Posterior cingulate gyrus (tissue), 11 donors: ENCODE measurements at regions of chr16 and their contacts with region 1.

Region 1: GRCh38 chr16:56191156-56191815 is at the start of gene GNAO1:
- DNase-seq: peak; percentile 65 to 97 (median 78)

Region 2: DNA sequence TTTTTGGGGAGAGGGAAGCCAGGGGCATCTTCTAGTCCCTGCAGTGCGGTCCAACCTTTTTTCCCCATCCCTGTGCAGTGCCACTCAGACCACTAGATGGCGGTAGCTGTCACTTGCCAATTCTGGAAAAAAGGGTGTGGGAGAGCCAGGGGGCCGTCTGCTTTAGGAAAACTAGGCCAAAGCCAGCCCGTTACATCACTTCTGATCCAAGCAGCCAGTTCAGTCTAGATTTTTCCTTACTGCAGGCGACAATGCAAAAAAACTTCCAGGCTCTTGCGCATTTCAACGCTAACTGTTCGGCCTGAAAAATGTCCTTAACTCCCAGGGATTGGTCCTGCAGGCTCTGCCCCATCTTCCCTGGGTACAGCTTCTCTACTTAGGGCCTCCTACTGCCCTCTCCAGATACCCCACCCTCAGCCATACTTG is 246.9 kb before region 1 on chr16:
- intact Hi-C with region 1: loop called (anchors 2 kb)
- DNase-seq: peak; percentile 65 to 96 (median 82)

Region 3: GRCh38 chr16:56246051-56246817 is 54.9 kb after region 1 on chr16:
- intact Hi-C with region 1: loop called (anchors 1 kb)
- DNase-seq: peak in 9 of 10 donors; percentile 59 to 97 (median 79)

Region 4: GRCh38 chr16:56305956-56306565 is 114.8 kb after region 1 on chr16:
- intact Hi-C with region 1: loop called (anchors 2 kb)
- DNase-seq: peak in 2 of 10 donors; percentile 69 to 79

Region 5: DNA sequence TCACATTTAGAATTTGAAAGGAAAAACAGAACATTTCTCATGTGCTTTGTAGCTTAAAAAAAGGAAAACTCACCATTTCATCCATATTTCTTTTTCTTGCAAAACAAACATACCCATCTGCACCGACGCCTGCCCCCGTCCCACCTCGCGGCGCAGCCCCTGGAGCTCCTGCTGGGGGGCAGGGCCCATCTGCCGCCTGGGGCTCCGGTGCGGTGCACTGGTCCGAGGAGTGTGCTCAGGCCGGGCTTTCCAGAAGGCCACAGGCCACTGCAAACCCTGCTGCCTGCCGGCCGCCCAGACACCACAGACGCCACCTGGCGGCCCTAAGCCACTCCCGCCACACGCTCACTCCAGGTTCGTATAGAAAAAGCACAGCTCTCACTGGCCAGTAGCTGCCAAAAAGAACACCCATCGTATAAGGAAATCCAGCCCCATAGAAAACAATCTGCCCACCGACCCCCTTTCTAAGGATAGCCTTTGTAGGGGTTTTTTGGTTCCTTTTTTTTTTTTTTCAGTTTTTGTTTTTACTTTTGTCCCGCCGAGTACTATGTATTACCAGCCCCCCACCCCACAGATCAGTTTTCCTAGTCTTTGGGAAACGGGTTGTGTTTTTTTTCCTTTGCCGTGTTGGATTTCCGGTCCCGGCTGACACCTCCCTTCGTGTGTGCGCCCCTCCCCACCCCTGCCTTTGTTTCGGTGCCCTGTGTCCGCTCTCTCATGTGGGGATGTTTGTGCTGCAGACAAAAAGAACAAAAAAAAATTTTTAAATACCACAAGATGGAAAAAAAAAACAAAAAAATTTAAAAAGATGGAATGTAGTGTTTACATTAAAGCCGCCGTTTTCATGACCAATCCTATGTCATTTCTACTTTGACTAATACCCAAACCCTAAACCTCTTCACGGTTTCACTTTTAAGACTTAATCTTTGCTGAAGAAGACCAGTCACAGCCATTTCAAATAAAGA is 165.3 kb after region 1 on chr16:
- intact Hi-C with region 1: loop called (anchors 1 kb)
- DNase-seq: peak; percentile 54 to 96 (median 76)